T-cell (primary cell): ENCODE measurements at regions of chr18 and their contacts with region 1.

Region 1: GRCh38 chr18:2655178-2655953 is at the start of gene SMCHD1:
- DNase-seq: peak; percentile 72 to 95 (median 83)
- ATAC-seq: peak; percentile 76 to 86 (median 79)
- H3K4me3 ChIP-seq: peak within 1 kb of the TSS; percentile 94 to 97
- H3K4me3 Mint-ChIP-seq: peak within 1 kb of the TSS; percentile 95 to 97 (median 96)
- H3K27ac ChIP-seq: peak within 1 kb of the TSS; percentile 100
- H3K27ac Mint-ChIP-seq: peak within 1 kb of the TSS; percentile 93 to 97
- H3K4me1 ChIP-seq: peaks cover 16 to 31% of the 10 kb centered on the region in 2 experiments
- H3K4me1 Mint-ChIP-seq: peaks cover 37 to 48% (median 42%) of the 10 kb centered on the region in 3 donors
- H3K27me3 ChIP-seq: no peaks in the 10 kb centered on the region
- H3K27me3 Mint-ChIP-seq: no peaks in the 10 kb centered on the region
- total RNA-seq, gene SMCHD1: 179 to 423 (median 206) TPM

Region 2: DNA sequence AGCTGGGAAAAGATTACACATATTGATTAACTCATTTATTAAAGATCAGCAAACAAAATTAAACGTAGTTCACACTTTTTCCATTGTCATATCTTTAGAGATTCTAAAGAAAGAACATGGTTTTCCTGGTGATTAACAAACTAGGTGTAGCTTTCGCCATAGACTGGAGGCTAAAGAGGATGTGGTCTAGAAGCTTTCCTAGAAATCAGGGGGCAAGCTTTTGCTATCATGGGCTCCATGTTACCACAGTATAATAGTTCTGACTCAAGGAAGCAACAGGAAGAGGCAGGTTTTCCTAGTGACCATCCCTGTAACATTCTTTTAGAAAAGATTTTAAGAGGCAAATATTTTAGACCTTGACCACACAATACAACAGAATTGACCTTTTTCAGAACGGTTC is 316.8 kb before region 1 on chr18:
- CTCF ChIA-PET with region 1: no interaction called
- POLR2A ChIA-PET with region 1: no interaction called
- DNase-seq: no peak
- ATAC-seq: no peak
- H3K4me3 ChIP-seq: no peak overlapping the region
- H3K4me3 Mint-ChIP-seq: no peak overlapping the region
- H3K27ac ChIP-seq: no peak overlapping the region
- H3K27ac Mint-ChIP-seq: no peak overlapping the region
- H3K4me1 ChIP-seq: no peaks in the 10 kb centered on the region
- H3K4me1 Mint-ChIP-seq: no peaks in the 10 kb centered on the region
- H3K27me3 ChIP-seq: peaks cover 0 to 2% of the 10 kb centered on the region in 2 experiments
- H3K27me3 Mint-ChIP-seq: peaks cover 19% of the 10 kb centered on the region in 2 donors

Region 3: GRCh38 chr18:2589345-2590068 is 65.9 kb before region 1 on chr18:
- CTCF ChIA-PET with region 1: interaction called, 4 to 11 read pairs
- POLR2A ChIA-PET with region 1: interaction called, 3 to 4 read pairs
- DNase-seq: peak in 1 of 35 experiments; percentile 45
- ATAC-seq: peak; percentile 69 to 87 (median 82)
- H3K4me3 ChIP-seq: peak overlapping the region; percentile 4 to 39
- H3K4me3 Mint-ChIP-seq: peak overlapping the region; percentile 56 to 82 (median 65)
- H3K27ac ChIP-seq: peak overlapping the region; percentile 92
- H3K27ac Mint-ChIP-seq: peak overlapping the region; percentile 94 to 96
- H3K4me1 ChIP-seq: peaks cover 15 to 47% of the 10 kb centered on the region in 2 experiments
- H3K4me1 Mint-ChIP-seq: peaks cover 47 to 56% (median 50%) of the 10 kb centered on the region in 3 donors
- H3K27me3 ChIP-seq: no peaks in the 10 kb centered on the region
- H3K27me3 Mint-ChIP-seq: no peaks in the 10 kb centered on the region

Region 4: DNA sequence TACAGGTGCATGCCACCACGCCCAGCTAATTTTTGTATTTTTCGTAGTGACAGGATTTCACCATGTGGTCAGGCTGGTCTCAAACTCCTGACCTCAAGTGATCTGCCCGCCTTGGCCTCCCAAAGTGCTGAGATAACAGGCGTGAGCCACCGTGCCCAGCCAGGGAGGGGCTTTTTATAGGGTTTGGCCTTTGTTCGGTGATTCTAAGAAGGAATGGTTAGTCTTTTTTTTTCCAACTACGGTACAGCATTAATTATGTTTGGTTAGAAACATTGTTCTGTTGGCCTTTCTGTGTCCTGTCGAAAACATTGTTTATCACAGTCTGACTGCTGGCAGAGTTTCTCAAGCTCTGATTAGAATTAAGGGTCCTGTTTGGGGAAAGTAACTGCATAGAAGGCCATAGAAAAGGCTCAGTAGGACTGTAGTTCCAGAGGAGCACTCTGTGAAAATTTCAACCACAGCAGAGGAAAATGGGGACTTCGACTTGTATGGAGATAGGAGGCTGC is 19.2 kb before region 1 on chr18:
- CTCF ChIA-PET with region 1: interaction called, 6 to 19 read pairs
- POLR2A ChIA-PET with region 1: interaction called, 20 to 120 read pairs
- DNase-seq: peak in 4 of 35 experiments; percentile 4 to 61 (median 20)
- ATAC-seq: peak; percentile 34 to 52 (median 49)
- H3K4me3 ChIP-seq: peak overlapping the region; percentile 0 to 35
- H3K4me3 Mint-ChIP-seq: peak overlapping the region; percentile 66 to 84 (median 79)
- H3K27ac ChIP-seq: peak overlapping the region; percentile 100
- H3K27ac Mint-ChIP-seq: peak overlapping the region; percentile 99 to 100
- H3K4me1 ChIP-seq: peaks cover 50 to 78% of the 10 kb centered on the region in 2 experiments
- H3K4me1 Mint-ChIP-seq: peaks cover 97 to 99% (median 98%) of the 10 kb centered on the region in 3 donors
- H3K27me3 ChIP-seq: no peaks in the 10 kb centered on the region
- H3K27me3 Mint-ChIP-seq: no peaks in the 10 kb centered on the region

Region 5: GRCh38 chr18:2672410-2672809 is 17.0 kb after region 1 on chr18:
- CTCF ChIA-PET with region 1: interaction called, 5 read pairs
- POLR2A ChIA-PET with region 1: interaction called, 3 to 10 read pairs
- DNase-seq: no peak
- ATAC-seq: no peak
- H3K4me3 ChIP-seq: no peak overlapping the region
- H3K4me3 Mint-ChIP-seq: no peak overlapping the region
- H3K27ac ChIP-seq: no peak overlapping the region
- H3K27ac Mint-ChIP-seq: peak overlapping the region in 1 of 2 donors; percentile 54
- H3K4me1 ChIP-seq: peaks cover 0 to 3% of the 10 kb centered on the region in 2 experiments
- H3K4me1 Mint-ChIP-seq: peaks cover 72 to 75% (median 74%) of the 10 kb centered on the region in 3 donors
- H3K27me3 ChIP-seq: no peaks in the 10 kb centered on the region
- H3K27me3 Mint-ChIP-seq: no peaks in the 10 kb centered on the region

Region 6: DNA sequence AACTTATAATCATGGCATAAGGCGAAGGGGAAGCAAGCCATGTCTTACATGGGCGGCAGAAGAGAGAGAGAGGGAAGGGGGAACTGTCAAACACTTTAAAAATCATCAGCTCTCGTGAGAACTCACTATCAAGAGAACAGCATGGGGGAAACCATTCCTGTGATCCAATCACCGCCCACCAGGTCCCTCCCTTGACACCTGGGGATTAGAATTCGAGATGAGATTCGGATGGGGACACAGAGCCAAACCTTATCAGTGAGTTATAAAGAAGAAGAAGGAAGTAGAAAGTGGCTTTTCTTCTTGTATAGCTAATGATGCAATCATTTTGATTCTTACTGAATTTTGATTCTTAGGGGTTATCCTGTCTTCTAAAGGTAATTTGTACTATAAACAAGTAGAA is 51.5 kb after region 1 on chr18:
- CTCF ChIA-PET with region 1: no interaction called
- POLR2A ChIA-PET with region 1: interaction called, 3 to 12 read pairs
- DNase-seq: no peak
- ATAC-seq: no peak
- H3K4me3 ChIP-seq: no peak overlapping the region
- H3K4me3 Mint-ChIP-seq: no peak overlapping the region
- H3K27ac ChIP-seq: no peak overlapping the region
- H3K27ac Mint-ChIP-seq: peak overlapping the region; percentile 42 to 71
- H3K4me1 ChIP-seq: no peaks in the 10 kb centered on the region
- H3K4me1 Mint-ChIP-seq: peaks cover 37 to 39% (median 37%) of the 10 kb centered on the region in 3 donors
- H3K27me3 ChIP-seq: no peaks in the 10 kb centered on the region
- H3K27me3 Mint-ChIP-seq: no peaks in the 10 kb centered on the region